PC-9 (cell line): ENCODE measurements at regions of chr4 and their contacts with region 1.

Region 1: DNA sequence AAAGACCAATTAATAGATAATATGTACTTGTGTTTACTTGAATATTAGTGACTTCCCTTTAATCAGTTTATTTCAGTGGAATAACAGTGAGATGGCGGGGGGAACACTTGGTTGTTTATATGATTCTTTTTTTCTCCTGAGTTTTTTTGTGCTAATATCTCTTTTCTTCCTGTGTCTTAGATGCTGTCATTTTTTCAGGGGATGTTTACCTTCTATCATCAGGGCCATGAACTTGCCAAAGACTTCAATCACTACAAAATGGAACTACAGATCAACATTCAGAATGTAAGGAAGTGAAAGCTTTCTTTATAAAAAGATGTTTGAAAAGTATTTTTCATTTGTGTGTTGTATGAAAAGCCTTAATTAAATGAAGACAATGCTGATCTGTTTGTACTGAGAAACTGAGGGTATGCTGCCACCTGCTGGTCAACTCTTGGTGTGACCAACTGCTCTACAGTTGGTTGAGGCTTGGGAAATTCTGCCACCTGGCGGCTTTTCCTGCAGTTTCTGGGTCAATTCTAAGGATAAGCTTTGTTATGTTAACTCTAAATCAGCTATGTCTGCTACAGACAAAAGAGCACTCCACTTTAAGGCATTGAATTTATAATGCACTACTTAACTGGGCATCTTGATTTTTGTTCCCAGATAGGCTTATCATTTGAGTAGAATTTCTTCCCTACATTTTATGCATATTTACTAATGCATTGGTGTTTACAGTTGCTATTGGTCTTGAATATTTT is 134.8 kb downstream of the ARHGAP10 start:
- DNase-seq: peak; percentile 49 to 80
- H3K4me3 ChIP-seq: no peak overlapping the region
- H3K27ac ChIP-seq: peak overlapping the region; percentile 26; the same call in 1 of the 2 replicates
- H3K4me1 ChIP-seq: no peaks in the 10 kb centered on the region
- H3K27me3 ChIP-seq: no peaks in the 10 kb centered on the region
- CTCF ChIP-seq: peak; percentile 97

Region 2: GRCh38 chr4:147019061-147019460 is 847.6 kb before region 1 on chr4:
- CTCF ChIA-PET with region 1: interaction called, 5 read pairs
- POLR2A ChIA-PET with region 1: no interaction called
- intact Hi-C with region 1: loop called (anchors 1 kb)
- DNase-seq: peak in 1 of 2 experiments; percentile 63
- H3K4me3 ChIP-seq: no peak overlapping the region
- H3K27ac ChIP-seq: no peak overlapping the region
- H3K4me1 ChIP-seq: no peaks in the 10 kb centered on the region
- H3K27me3 ChIP-seq: no peaks in the 10 kb centered on the region
- CTCF ChIP-seq: peak; percentile 76

Region 3: DNA sequence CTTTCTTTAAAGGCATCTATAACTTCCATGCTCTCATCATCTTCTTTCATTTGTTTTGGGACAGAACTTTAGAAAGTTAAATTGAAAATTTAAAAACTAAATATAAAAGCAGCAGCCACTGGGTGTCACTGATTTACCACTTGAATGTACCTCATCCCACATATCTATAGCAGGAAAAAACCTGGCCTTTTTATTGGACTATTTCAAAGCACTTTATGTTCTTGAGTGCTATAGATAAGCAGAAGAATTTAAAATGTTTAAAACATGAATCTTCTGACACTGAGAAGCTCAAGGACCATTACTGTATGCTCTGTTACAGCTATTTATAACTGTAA is 755.7 kb before region 1 on chr4:
- CTCF ChIA-PET with region 1: no interaction called
- POLR2A ChIA-PET with region 1: no interaction called
- intact Hi-C with region 1: loop called (anchors 5 kb)
- DNase-seq: no peak
- H3K4me3 ChIP-seq: no peak overlapping the region
- H3K27ac ChIP-seq: no peak overlapping the region
- H3K4me1 ChIP-seq: no peaks in the 10 kb centered on the region
- H3K27me3 ChIP-seq: no peaks in the 10 kb centered on the region
- CTCF ChIP-seq: peak; percentile 40; the same call in 1 of the 2 replicates

Region 4: DNA sequence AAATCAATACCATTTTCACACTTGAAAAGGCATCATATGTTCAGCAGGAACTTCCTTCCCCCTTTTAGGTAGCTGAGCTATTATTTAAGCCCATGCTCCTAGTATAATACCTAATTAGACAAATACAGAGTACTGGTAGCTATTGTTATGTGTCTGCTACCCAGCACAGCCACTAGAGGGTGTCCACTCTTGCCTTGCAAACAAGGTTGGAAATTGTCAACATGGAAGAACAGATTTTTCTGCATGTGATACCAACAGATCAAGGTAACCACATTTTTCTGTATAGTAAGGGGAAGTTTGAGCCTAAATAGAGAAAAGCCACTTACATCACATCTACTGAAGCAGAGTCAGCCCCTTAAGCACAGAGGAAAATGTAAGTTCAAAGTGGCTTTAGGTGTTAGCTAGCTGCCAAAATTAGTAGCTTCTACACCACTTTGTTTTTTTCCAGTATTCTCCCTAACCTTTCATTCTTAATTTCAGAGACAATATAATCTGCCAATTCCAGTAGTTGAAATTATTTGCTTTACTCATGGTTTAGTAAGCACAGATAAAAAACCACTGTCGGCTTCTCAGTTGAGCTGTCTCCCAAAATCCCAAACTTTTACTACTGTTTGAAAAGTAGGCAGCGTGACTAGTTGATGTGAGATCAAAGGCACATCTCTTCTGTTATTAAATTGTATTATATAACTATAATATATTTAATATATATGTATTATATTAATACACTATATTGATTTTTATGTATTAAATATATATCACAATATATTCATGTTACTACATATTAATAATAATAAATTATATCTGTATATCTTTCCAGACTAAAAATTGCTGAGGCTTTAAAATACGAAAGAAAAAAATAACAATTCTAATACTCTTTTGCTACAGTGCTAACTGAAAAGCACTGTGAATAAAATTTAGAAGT is 347.6 kb before region 1 on chr4:
- CTCF ChIA-PET with region 1: interaction called, 5 read pairs
- POLR2A ChIA-PET with region 1: no interaction called
- intact Hi-C with region 1: loop called (anchors 2 kb)
- DNase-seq: peak; percentile 44 to 45
- H3K4me3 ChIP-seq: no peak overlapping the region
- H3K27ac ChIP-seq: no peak overlapping the region
- H3K4me1 ChIP-seq: no peaks in the 10 kb centered on the region
- H3K27me3 ChIP-seq: no peaks in the 10 kb centered on the region
- CTCF ChIP-seq: peak; percentile 83

Region 5: GRCh38 chr4:147560637-147561036 is 306.1 kb before region 1 on chr4:
- CTCF ChIA-PET with region 1: no interaction called
- POLR2A ChIA-PET with region 1: no interaction called
- intact Hi-C with region 1: no loop called
- DNase-seq: no peak
- H3K4me3 ChIP-seq: no peak overlapping the region
- H3K27ac ChIP-seq: no peak overlapping the region
- H3K4me1 ChIP-seq: no peaks in the 10 kb centered on the region
- H3K27me3 ChIP-seq: no peaks in the 10 kb centered on the region
- CTCF ChIP-seq: no peak

Region 6: GRCh38 chr4:147638942-147639341 is 227.8 kb before region 1 on chr4:
- CTCF ChIA-PET with region 1: interaction called, 4 read pairs
- POLR2A ChIA-PET with region 1: no interaction called
- intact Hi-C with region 1: loop called (anchors 5 kb)
- DNase-seq: no peak
- H3K4me3 ChIP-seq: no peak overlapping the region
- H3K27ac ChIP-seq: no peak overlapping the region
- H3K4me1 ChIP-seq: no peaks in the 10 kb centered on the region
- H3K27me3 ChIP-seq: no peaks in the 10 kb centered on the region
- CTCF ChIP-seq: no peak

Region 7: GRCh38 chr4:147707865-147708672 is 158.6 kb before region 1 on chr4:
- CTCF ChIA-PET with region 1: interaction called, 11 read pairs
- POLR2A ChIA-PET with region 1: no interaction called
- intact Hi-C with region 1: loop called (anchors 1 kb)
- DNase-seq: peak in 1 of 2 experiments; percentile 44
- H3K4me3 ChIP-seq: no peak overlapping the region
- H3K27ac ChIP-seq: no peak overlapping the region
- H3K4me1 ChIP-seq: peaks cover 3% of the 10 kb centered on the region; the same call in 1 of the 2 replicates
- H3K27me3 ChIP-seq: no peaks in the 10 kb centered on the region
- CTCF ChIP-seq: peak; percentile 88

Region 8: GRCh38 chr4:147808447-147808846 is 58.3 kb before region 1 on chr4:
- CTCF ChIA-PET with region 1: no interaction called
- POLR2A ChIA-PET with region 1: no interaction called
- intact Hi-C with region 1: no loop called
- DNase-seq: no peak
- H3K4me3 ChIP-seq: no peak overlapping the region
- H3K27ac ChIP-seq: no peak overlapping the region
- H3K4me1 ChIP-seq: peaks cover 7% of the 10 kb centered on the region; the same call in 1 of the 2 replicates
- H3K27me3 ChIP-seq: no peaks in the 10 kb centered on the region
- CTCF ChIP-seq: no peak